ENCODE measurements at regions of chr6 and their contacts with region 1.

Region 1: DNA sequence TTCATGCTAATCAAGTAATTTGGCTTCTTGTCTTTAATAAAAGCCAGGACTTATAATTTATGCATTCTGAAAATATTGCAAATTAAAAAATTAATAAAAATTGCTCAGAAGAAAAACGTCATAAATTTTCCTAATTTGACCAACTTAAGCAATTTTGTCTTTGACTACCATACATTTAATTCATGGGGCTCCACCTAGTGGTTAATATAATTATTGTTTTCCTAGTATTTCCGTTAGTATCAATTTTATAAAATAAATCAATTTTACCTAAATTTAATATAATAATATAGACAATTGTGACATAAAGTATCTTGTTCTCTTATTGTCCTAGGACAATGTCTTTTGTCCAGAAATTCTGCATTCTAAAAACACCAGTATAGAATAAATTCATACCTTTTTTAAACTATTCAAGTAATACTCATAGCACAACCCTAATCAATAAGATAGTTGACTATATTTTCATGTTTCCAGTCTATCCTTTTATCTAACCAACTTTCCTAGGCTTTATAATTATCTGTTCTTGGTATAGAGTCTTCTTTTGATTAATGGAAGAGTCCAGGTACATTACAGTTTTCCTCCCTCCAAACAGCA is 319.9 kb downstream of the TRDN start:
- DNase-seq: no peak
- H3K4me3 ChIP-seq: no peak overlapping the region
- H3K27ac ChIP-seq: no peak overlapping the region
- H3K4me1 ChIP-seq: no peaks in the 10 kb centered on the region
- H3K27me3 ChIP-seq: no peaks in the 10 kb centered on the region
- CTCF ChIP-seq: peak; percentile 35 to 45

Region 2: DNA sequence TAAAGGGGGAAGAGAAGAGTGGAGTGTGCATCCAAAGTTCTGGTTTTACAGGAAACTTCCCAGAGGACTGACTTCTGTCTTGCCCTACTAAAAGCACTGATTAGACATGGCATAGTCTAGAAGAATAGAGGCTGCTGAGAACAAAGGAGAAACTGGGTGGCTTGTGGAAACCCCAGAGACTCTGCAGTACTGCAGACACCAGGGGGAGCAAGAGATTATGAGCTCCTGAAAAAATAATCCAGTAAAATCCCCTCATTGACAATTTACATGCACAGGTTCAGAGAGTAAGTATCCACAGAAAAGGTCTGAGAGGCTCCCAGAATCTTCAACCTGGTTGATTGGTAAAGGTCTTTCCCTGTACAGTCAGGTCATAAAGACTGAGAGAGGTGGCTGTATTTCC is 369.5 kb before region 1 on chr6:
- CTCF ChIA-PET with region 1: no interaction called
- dilution Hi-C with region 1: no loop called
- in situ Hi-C with region 1: loop called (anchors 10 to 25 kb)
- intact Hi-C with region 1: loop called (anchors 1 kb)
- DNase-seq: peak; percentile 7
- H3K4me3 ChIP-seq: no peak overlapping the region
- H3K27ac ChIP-seq: no peak overlapping the region
- H3K4me1 ChIP-seq: no peaks in the 10 kb centered on the region
- H3K27me3 ChIP-seq: no peaks in the 10 kb centered on the region
- CTCF ChIP-seq: peak; percentile 45 to 75

Region 3: GRCh38 chr6:122956376-122956775 is 360.5 kb before region 1 on chr6:
- CTCF ChIA-PET with region 1: no interaction called
- dilution Hi-C with region 1: no loop called
- in situ Hi-C with region 1: loop called (anchors 10 to 25 kb)
- intact Hi-C with region 1: no loop called
- DNase-seq: no peak
- H3K4me3 ChIP-seq: no peak overlapping the region
- H3K27ac ChIP-seq: no peak overlapping the region
- H3K4me1 ChIP-seq: no peaks in the 10 kb centered on the region
- H3K27me3 ChIP-seq: no peaks in the 10 kb centered on the region
- CTCF ChIP-seq: no peak

Region 4: DNA sequence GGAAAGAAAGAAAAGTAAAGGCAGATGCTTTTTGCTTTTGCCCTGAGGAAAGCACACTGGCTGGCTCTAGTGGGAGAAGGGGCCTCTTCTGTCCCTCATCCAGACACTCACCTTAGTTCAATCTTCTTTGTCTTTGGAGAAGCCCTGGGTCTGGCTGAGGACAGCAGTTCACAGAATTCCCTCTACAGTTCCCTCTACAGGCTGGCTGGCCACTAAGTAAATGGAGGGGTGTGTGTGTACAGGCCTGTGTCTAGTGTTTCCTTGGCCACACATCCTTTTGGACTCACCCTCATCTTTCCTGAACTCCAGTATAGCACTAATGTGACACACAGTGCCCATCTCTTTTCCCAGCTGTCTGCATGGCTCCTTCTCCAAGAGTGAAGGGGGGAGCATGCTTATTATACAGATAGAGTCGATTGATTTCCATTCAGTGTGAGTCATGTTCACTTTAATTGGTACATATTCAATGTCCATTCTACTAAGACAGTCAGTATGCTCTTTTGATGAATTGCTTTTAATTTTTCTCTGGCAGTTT is 346.8 kb before region 1 on chr6:
- CTCF ChIA-PET with region 1: no interaction called
- dilution Hi-C with region 1: no loop called
- in situ Hi-C with region 1: loop called in 1 of 2 experiments (anchors 25 kb)
- intact Hi-C with region 1: no loop called
- DNase-seq: no peak
- H3K4me3 ChIP-seq: no peak overlapping the region
- H3K27ac ChIP-seq: no peak overlapping the region
- H3K4me1 ChIP-seq: no peaks in the 10 kb centered on the region
- H3K27me3 ChIP-seq: no peaks in the 10 kb centered on the region
- CTCF ChIP-seq: no peak

Region 5: GRCh38 chr6:123380257-123380656 is 63.4 kb after region 1 on chr6:
- CTCF ChIA-PET with region 1: no interaction called
- dilution Hi-C with region 1: no loop called
- in situ Hi-C with region 1: no loop called
- intact Hi-C with region 1: no loop called
- DNase-seq: peak; percentile 14
- H3K4me3 ChIP-seq: no peak overlapping the region
- H3K27ac ChIP-seq: no peak overlapping the region
- H3K4me1 ChIP-seq: no peaks in the 10 kb centered on the region
- H3K27me3 ChIP-seq: peaks cover 4% of the 10 kb centered on the region
- CTCF ChIP-seq: peak; percentile 24 to 43

Region 6: GRCh38 chr6:123953920-123954319 is 637.1 kb after region 1 on chr6:
- CTCF ChIA-PET with region 1: no interaction called
- dilution Hi-C with region 1: no loop called
- in situ Hi-C with region 1: no loop called
- intact Hi-C with region 1: no loop called
- DNase-seq: peak; percentile 2
- H3K4me3 ChIP-seq: no peak overlapping the region
- H3K27ac ChIP-seq: no peak overlapping the region
- H3K4me1 ChIP-seq: no peaks in the 10 kb centered on the region
- H3K27me3 ChIP-seq: no peaks in the 10 kb centered on the region
- CTCF ChIP-seq: no peak